Panc1 (cell line): ENCODE measurements at regions of chr13 and their contacts with region 1.

Region 1: DNA sequence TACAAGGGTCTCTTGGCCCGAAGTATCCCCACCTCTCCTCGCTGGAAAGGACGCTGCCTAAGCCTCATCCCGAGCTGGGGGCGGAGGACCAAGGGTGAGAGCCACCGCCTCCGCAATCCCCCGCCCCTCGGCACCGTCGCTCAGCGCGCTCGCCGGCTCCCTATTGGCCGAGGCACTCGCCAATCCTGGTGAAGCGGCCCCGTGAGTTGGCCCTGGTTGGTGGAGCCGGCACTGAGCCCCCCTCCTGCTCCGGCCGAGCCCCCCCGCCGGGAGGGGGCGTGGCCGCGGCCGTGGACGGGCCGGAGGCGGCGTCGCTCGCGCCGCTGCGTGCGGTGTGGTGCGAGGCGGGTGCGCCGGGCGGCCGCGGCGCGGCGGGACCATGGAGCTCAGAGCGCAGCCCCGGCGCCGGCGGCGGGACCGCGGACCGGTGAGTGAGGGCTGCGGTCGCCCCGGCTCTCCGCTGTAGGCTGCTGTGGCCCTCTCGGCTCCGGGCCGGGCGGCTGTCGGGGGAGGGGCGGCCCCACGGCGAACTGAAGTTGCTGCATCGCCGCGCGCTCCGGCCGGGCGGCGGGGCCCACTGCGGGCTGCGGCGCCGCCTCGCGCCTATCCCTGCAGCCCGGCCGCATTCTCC is at the start of gene WASF3:
- DNase-seq: peak; percentile 12
- ATAC-seq: peak; percentile 98
- H3K4me3 ChIP-seq: peak within 1 kb of the TSS; percentile 60 to 65
- H3K27ac ChIP-seq: no peak within 1 kb of the TSS; the same call in 1 of the 2 replicates
- H3K4me1 ChIP-seq: peaks cover 15% of the 10 kb centered on the region
- H3K27me3 ChIP-seq: no peaks in the 10 kb centered on the region
- CTCF ChIP-seq: no peak
- total RNA-seq, gene WASF3: 20.2 TPM

Region 2: DNA sequence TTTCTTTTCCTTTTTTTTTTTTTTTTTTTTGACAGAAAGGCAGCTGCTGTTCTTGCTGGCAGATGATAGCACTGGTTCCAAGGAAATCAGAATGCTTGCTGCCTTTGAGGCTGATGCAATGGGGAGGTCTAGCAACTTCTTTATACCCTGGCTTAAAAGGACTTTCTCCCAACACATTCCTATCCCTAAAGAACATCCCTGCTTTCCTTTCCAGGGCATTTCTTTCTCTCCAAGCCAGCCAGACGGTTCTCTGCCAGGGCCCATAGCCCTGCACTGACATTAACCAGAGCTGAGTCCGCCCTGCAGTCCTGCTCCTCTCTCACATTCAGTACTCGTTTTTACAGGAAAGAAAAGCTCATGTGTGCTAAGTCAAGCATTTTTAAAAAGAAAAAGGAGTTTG is 133.9 kb before region 1 on chr13:
- CTCF ChIA-PET with region 1: no interaction called
- POLR2A ChIA-PET with region 1: no interaction called
- in situ Hi-C with region 1: no loop called
- intact Hi-C with region 1: no loop called
- DNase-seq: no peak
- ATAC-seq: no peak
- H3K4me3 ChIP-seq: no peak overlapping the region
- H3K27ac ChIP-seq: no peak overlapping the region
- H3K4me1 ChIP-seq: no peaks in the 10 kb centered on the region
- H3K27me3 ChIP-seq: no peaks in the 10 kb centered on the region
- CTCF ChIP-seq: no peak

Region 3: DNA sequence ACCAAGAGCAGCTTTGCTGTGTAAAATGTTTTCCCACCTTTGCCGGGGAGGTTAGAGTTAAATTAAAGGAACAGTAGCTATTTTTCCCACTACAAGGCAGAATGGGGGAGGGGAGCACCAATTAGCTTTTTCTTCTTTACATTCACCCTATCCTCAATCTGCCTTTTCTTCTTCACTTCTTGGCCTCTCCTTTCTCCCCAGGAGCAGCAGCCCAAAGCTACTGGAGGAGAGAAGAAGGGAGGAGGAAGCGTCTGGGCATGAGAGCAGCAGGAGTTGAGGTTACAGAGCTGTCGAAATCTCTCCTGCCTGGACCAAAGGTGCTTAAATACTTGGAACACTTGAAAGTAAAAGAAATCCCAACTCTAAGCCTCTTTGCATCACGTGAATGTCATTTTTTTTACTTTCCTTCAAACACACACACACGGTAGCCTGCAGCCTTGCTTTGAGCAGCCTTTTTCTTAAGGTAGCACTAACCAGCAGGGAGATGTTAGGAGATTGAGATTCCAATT is 39.0 kb before region 1 on chr13:
- CTCF ChIA-PET with region 1: no interaction called
- POLR2A ChIA-PET with region 1: interaction called, 11 read pairs
- in situ Hi-C with region 1: no loop called
- intact Hi-C with region 1: no loop called
- DNase-seq: no peak
- ATAC-seq: no peak
- H3K4me3 ChIP-seq: no peak overlapping the region
- H3K27ac ChIP-seq: no peak overlapping the region
- H3K4me1 ChIP-seq: no peaks in the 10 kb centered on the region
- H3K27me3 ChIP-seq: no peaks in the 10 kb centered on the region
- CTCF ChIP-seq: no peak